Heart left ventricle (tissue), 16 donors: ENCODE measurements at regions of chr1 and their contacts with region 1.

Region 1: DNA sequence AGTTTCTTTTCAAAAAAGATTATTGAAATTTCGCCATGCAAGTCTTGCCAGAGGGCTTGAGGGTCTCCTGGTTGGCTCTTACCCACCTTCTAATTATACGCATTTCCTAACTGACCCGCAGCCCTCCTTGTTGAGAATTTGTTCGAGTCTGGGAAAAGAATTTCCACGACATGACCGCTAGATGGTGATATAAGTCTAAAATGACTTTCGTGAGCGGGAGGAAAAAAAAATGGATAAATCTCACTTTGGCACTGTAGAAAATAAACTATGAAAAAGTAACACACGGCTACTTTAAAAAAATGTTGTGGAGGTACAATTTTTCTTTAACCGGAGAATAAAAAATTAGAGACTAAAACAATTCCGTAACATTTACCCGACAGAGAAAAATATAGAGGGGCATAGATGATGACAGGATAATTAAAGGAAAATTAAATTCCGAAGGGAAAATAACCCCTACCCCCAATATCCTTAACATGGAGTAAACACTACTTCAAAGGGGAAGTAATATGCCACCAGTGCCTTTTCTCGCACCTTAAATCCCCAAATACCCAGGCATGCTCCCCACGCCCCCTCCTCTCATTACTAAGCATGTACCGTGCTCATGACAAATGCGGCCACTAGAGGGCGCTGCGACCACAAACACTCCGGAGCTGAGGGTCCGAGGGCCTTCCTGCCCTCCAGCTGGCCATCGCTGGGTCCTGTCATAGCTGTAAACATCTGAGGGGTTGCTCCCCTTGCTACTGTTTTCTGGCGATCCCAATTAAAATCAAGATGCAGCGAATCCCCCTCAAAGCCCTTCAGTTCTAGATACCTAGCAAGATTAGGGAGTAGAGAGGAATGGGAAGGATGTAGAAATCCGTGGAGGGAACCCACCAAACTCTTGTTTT is 266.9 kb downstream of the ASTN1 start:
- DNase-seq: peak; percentile 35 to 76 (median 47)
- ATAC-seq: peak in 3 of 4 donors; percentile 31 to 73 (median 68)
- H3K4me3 ChIP-seq: peak overlapping the region in 8 of 12 donors; percentile 8 to 43 (median 30)
- H3K27ac ChIP-seq: no peak overlapping the region
- H3K4me1 ChIP-seq: peaks cover 0 to 16% (median 5%) of the 10 kb centered on the region in 12 donors
- H3K27me3 ChIP-seq: peaks cover 0 to 47% (median 0%) of the 10 kb centered on the region in 9 donors
- CTCF ChIP-seq: peak; percentile 52 to 79 (median 66)
- POLR2A ChIP-seq: no peak

Region 2: GRCh38 chr1:176949033-176949662 is 51.6 kb after region 1 on chr1:
- intact Hi-C with region 1: loop called in 4 of 10 experiments (anchors 2 to 5 kb)
- DNase-seq: peak; percentile 24 to 60 (median 52)
- ATAC-seq: peak; percentile 32 to 76 (median 66)
- H3K4me3 ChIP-seq: no peak overlapping the region
- H3K27ac ChIP-seq: no peak overlapping the region
- H3K4me1 ChIP-seq: no peaks in the 10 kb centered on the region
- H3K27me3 ChIP-seq: no peaks in the 10 kb centered on the region
- CTCF ChIP-seq: peak; percentile 26 to 67 (median 46)
- POLR2A ChIP-seq: no peak

Region 3: GRCh38 chr1:177181631-177182291 is 284.2 kb after region 1 on chr1:
- intact Hi-C with region 1: loop called (anchors 1 to 2 kb)
- DNase-seq: peak; percentile 44 to 72 (median 54)
- ATAC-seq: peak; percentile 58 to 95 (median 84)
- H3K4me3 ChIP-seq: peak overlapping the region in 7 of 12 donors; percentile 11 to 36 (median 20)
- H3K27ac ChIP-seq: no peak overlapping the region
- H3K4me1 ChIP-seq: peaks cover 0 to 9% (median 0%) of the 10 kb centered on the region in 12 donors
- H3K27me3 ChIP-seq: peaks cover 0 to 29% (median 9%) of the 10 kb centered on the region in 9 donors
- CTCF ChIP-seq: peak; percentile 69 to 89 (median 79)
- POLR2A ChIP-seq: no peak

Region 4: DNA sequence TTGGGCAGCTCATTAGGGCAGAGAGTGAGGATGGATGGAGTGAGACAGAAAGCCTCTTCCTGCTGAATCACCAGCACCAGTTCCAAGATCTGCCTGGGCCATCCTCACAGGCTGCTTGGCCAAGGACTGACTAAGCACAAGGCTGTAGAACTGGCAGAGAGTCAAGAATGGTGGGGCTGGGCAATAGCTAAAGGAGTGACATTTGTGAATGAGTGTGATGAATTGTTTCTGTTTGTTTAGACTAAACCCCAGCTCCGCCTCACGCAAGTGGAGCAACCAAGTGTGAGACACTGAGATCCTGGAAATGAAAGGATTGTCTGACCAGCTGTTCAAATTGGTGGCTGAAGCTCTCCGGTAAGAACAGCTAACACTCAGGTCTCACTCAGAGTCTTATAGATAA is 311.8 kb after region 1 on chr1:
- intact Hi-C with region 1: no loop called
- DNase-seq: peak; percentile 47 to 90 (median 67)
- ATAC-seq: peak; percentile 80 to 94 (median 88)
- H3K4me3 ChIP-seq: no peak overlapping the region
- H3K27ac ChIP-seq: peak overlapping the region in 6 of 12 donors; percentile 2 to 49 (median 32)
- H3K4me1 ChIP-seq: peaks cover 0 to 35% (median 9%) of the 10 kb centered on the region in 12 donors
- H3K27me3 ChIP-seq: no peaks in the 10 kb centered on the region
- CTCF ChIP-seq: no peak
- POLR2A ChIP-seq: no peak

Region 5: GRCh38 chr1:177355595-177355994 is 458.0 kb after region 1 on chr1:
- intact Hi-C with region 1: loop called in 6 of 10 experiments (anchors 2 to 10 kb)
- DNase-seq: no peak
- ATAC-seq: peak in 2 of 4 donors; percentile 42 to 68
- H3K4me3 ChIP-seq: no peak overlapping the region
- H3K27ac ChIP-seq: no peak overlapping the region
- H3K4me1 ChIP-seq: no peaks in the 10 kb centered on the region
- H3K27me3 ChIP-seq: peaks cover 0 to 28% (median 0%) of the 10 kb centered on the region in 9 donors
- CTCF ChIP-seq: peak in 11 of 12 donors; percentile 19 to 54 (median 36)
- POLR2A ChIP-seq: no peak

Region 6: DNA sequence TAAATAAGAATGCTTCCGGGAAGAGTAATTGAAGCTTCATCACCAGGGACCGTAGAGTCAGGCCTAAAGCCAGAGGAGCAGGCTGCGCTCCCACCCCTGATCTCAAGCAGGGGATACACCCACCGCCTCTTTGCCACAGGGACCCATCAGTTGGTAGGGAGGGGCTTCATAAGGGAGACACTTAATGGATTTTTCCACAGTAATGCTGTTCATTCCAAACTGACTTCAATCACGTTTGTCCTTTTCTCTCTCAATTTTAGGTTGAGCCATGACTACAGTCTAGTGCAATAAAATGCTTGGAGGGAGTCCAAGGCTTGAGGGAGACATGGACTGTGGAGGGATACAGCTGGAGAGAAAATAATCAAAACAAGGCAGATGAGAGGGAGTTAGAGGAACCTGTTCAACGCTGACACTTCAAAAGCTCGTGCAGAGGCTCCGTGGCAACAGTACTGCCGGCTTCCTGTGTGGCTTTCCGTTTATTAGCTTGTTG is 960.8 kb after region 1 on chr1:
- intact Hi-C with region 1: loop called in 1 of 10 experiments (anchors 5 kb)
- DNase-seq: no peak
- ATAC-seq: no peak
- H3K4me3 ChIP-seq: no peak overlapping the region
- H3K27ac ChIP-seq: no peak overlapping the region
- H3K4me1 ChIP-seq: peaks cover 0 to 11% (median 0%) of the 10 kb centered on the region in 12 donors
- H3K27me3 ChIP-seq: no peaks in the 10 kb centered on the region
- CTCF ChIP-seq: no peak
- POLR2A ChIP-seq: no peak